ENCODE measurements at regions of chr17 and their contacts with region 1.

Region 1: DNA sequence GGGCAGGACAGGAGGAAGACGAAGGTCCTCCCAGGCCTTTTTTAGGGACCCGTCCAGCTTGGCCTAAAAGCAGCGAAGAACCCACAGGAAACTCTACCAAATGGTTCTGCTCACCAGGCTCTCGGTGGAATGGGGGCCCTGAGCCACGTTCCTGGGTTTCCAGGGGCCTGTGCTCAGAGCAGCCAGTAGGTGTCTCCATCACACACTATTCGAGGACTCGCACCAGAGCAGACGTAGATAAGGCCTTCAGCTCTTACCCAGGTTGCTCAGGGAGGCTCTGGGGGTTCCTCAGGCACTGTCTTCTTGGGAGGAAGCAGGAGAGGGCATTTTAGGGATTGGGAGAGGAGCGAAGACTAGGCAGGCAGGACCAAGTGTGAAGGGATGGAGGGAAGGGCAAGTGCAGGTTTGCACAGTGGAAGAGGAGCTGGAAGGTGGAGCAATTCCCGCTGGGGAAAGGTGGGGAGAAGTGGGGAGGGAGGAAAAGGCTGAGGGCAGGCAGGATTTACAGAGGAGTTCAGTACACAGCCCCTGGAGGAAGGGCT is 157.1 kb downstream of the RGS9 start:
- DNase-seq: no peak
- H3K4me3 ChIP-seq: no peak overlapping the region
- H3K27ac ChIP-seq: no peak overlapping the region
- H3K4me1 ChIP-seq: peaks cover 0 to 22% (median 8%) of the 10 kb centered on the region in 6 donors
- H3K27me3 ChIP-seq: no peaks in the 10 kb centered on the region
- CTCF ChIP-seq: peak; percentile 25 to 83 (median 67)
- POLR2A ChIP-seq: no peak

Region 2: GRCh38 chr17:65071861-65072260 is 222.4 kb before region 1 on chr17:
- intact Hi-C with region 1: no loop called
- DNase-seq: no peak
- H3K4me3 ChIP-seq: no peak overlapping the region
- H3K27ac ChIP-seq: no peak overlapping the region
- H3K4me1 ChIP-seq: peaks cover 0 to 40% (median 23%) of the 10 kb centered on the region in 6 donors
- H3K27me3 ChIP-seq: no peaks in the 10 kb centered on the region
- CTCF ChIP-seq: no peak
- POLR2A ChIP-seq: no peak

Region 3: DNA sequence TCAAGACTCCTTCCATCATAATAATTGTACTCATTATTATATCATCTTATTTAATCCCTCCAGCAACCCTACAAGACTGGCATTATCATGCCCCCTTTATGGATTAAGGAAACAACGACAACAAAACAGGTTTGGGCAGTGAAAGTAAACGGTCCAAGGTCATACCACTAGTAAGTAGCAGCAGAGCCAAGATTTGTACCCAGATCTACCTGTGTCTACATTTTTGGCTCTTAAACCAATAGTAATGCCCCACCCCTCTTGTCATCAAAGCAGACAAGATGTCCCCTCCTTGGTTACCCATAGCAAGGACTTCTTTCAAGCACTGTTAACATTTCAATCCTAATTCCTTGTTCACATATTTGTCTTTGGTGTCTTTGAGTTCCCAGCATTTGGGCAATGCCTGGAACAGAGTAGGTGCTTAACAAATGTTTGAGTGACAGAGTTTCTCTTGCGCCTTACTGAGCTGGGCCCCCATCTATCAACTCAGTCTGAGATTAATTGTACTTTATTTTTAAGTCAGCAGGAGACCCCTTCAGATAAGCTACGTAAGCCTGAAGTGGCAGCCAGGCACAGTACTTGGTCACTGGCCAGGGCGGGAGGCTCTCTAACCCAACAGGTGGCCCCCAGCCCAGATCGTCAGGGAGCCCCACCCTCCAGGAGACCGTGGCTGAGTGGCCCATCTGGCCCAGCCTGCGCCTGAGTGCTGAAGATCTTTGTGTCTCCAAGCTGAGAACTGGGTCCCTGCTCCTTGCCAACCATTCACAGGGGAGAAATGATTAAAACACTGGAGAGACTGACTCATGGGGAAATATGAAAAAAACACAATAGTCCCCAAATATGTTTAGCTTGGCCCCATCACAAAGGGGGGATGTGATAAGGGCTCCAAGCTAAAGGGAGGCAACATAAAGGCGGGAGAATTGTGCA is 191.4 kb after region 1 on chr17:
- intact Hi-C with region 1: no loop called
- DNase-seq: no peak
- H3K4me3 ChIP-seq: no peak overlapping the region
- H3K27ac ChIP-seq: no peak overlapping the region
- H3K4me1 ChIP-seq: peaks cover 0 to 11% (median 0%) of the 10 kb centered on the region in 6 donors
- H3K27me3 ChIP-seq: no peaks in the 10 kb centered on the region
- CTCF ChIP-seq: no peak
- POLR2A ChIP-seq: no peak

Region 4: DNA sequence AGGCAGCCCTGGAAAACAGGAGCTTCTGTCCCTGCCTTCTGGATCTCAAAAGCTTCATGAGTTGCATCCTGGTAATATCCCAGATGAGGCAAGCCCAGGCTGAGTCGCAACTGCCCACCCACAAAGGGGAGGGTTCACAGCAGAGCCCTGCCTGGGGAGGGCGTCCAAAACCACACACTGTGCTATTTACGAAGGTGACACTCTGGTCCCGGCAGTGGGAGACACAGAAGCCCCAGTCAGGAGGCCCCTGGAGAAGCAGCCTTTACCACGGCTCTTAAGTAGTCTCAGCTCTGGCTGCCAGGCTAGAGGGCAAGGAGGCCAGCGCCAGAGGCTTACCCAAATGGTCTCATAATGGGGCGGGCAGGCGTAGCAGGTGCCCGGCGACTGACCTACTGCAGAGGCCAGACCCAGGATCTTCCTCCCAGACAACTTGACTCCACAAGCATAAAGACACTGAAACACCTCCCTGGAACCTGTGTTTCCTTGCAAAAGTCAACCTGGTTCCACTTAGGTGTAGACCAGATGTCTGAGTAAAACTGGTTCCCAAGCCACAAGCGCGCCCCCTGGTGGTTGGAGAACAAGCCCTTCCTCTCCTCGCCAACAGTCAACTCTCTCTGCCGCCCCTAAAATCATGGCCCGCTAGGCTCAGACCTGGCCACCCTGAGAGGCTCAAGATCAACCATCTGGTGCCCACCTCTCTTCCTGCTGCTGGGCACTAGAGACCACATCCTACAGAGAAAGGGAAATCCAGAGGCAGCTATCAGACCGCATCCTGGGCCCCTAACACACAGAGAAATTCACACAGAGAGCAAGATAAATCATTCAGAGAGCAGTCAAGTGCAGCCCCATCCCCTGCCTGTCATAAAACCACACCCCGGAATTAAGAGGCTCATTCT is 262.0 kb after region 1 on chr17:
- intact Hi-C with region 1: loop called (anchors 5 kb)
- DNase-seq: peak; percentile 92
- H3K4me3 ChIP-seq: peak overlapping the region in 2 of 8 donors; percentile 10 to 73
- H3K27ac ChIP-seq: peak overlapping the region in 5 of 8 donors; percentile 20 to 87 (median 63)
- H3K4me1 ChIP-seq: peaks cover 0 to 40% (median 6%) of the 10 kb centered on the region in 6 donors
- H3K27me3 ChIP-seq: peaks cover 0 to 53% (median 16%) of the 10 kb centered on the region in 7 donors
- CTCF ChIP-seq: peak; percentile 38 to 84 (median 69)
- POLR2A ChIP-seq: no peak

Region 5: DNA sequence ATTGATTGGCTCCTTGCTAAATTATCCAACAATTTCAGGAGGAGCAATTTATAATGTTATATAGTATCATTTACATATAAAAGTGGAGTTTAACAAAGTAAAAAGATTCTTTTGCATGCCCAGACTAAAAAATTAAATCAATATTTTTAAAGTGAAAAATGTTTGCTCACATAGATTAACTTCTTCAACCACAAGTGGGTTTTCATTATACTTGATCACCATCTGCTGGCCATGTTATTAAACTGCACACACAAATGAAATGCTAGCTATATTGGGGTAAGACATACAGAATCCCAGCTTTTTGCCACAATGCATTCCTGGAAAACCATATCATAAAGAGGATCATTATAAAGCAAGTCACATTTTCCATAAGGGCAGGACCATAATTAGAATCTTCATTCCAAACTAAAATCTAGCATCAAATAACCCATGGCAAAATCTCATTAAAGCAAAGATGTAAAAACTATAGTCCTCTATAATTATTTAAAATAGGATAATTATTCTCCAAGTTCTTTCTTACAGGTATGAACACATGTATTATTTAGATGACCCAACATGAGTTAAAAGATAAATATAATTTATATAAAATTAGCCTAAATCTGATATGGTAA is 871.4 kb after region 1 on chr17:
- intact Hi-C with region 1: loop called (anchors 5 kb)
- DNase-seq: no peak
- H3K4me3 ChIP-seq: no peak overlapping the region
- H3K27ac ChIP-seq: no peak overlapping the region
- H3K4me1 ChIP-seq: peaks cover 0 to 3% (median 0%) of the 10 kb centered on the region in 6 donors
- H3K27me3 ChIP-seq: no peaks in the 10 kb centered on the region
- CTCF ChIP-seq: peak; percentile 45 to 80 (median 71)
- POLR2A ChIP-seq: no peak